Activated T-helper 1 cell treated with anti-CD3 and anti-CD28 coated beads, Interleukin-12 subunit alpha, Interleukin-12 subunit beta, Interleukin-2, Interleukin-4 antibody, amounts not matched to agents 30 ng/mL and 10 ng/mL and 1 ng/mL, durations not matched to agents 14 hours and 24 hours and 36 hours (primary cell): ENCODE measurements at regions of chr14 and their contacts with region 1.

Region 1: GRCh38 chr14:21414137-21414631 is 30.4 kb upstream of the SUPT16H start:
- DNase-seq: no peak
- H3K4me3 Mint-ChIP-seq: peak overlapping the region; percentile 19
- H3K27ac Mint-ChIP-seq: peak overlapping the region; percentile 92
- H3K4me1 Mint-ChIP-seq: peaks cover 26% of the 10 kb centered on the region
- H3K27me3 Mint-ChIP-seq: no peaks in the 10 kb centered on the region

Region 2: DNA sequence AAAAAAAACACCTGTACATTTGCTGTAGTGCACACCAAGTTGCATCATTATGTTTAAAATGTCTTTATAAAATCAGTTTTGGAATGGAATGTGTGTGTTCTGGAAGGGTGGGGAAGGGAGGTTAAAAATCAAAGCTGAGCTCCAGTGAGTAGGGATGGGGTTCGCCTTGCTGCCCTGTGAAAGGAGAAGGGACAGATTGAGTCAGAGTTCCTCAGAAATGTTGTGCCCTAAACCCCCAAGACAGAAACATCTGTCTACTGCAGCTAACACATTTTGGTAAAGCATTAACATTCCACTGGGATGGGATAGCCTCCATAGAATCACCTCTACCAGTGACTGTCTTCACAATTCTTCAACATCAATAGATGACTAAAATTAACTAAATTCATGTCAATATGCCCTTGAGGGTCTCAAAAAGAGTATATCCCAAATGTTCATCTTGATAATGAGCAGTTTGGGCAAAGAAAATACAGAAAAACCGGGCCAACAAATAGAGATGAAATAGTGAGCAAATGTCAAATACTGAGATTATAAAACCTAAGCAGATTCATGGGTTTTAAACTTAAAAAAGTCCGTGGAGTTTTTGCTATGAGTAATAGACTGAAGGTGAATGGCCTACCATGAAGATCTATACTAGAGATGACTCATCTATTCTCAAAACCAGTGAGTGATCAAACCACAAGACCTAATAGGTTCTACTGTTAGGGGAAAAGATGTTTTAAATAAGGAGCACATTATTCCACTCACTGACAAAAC is 150.3 kb before region 1 on chr14:
- intact Hi-C with region 1: loop called (anchors 1 kb)
- DNase-seq: no peak
- H3K4me3 Mint-ChIP-seq: peak overlapping the region; percentile 99
- H3K27ac Mint-ChIP-seq: peak overlapping the region; percentile 91
- H3K4me1 Mint-ChIP-seq: peaks cover 70% of the 10 kb centered on the region
- H3K27me3 Mint-ChIP-seq: no peaks in the 10 kb centered on the region

Region 3: GRCh38 chr14:21449899-21450216 is 35.7 kb after region 1 on chr14:
- intact Hi-C with region 1: loop called (anchors 1 kb)
- DNase-seq: no peak
- H3K4me3 Mint-ChIP-seq: peak overlapping the region; percentile 27
- H3K27ac Mint-ChIP-seq: peak overlapping the region; percentile 84
- H3K4me1 Mint-ChIP-seq: peaks cover 51% of the 10 kb centered on the region
- H3K27me3 Mint-ChIP-seq: no peaks in the 10 kb centered on the region

Region 4: DNA sequence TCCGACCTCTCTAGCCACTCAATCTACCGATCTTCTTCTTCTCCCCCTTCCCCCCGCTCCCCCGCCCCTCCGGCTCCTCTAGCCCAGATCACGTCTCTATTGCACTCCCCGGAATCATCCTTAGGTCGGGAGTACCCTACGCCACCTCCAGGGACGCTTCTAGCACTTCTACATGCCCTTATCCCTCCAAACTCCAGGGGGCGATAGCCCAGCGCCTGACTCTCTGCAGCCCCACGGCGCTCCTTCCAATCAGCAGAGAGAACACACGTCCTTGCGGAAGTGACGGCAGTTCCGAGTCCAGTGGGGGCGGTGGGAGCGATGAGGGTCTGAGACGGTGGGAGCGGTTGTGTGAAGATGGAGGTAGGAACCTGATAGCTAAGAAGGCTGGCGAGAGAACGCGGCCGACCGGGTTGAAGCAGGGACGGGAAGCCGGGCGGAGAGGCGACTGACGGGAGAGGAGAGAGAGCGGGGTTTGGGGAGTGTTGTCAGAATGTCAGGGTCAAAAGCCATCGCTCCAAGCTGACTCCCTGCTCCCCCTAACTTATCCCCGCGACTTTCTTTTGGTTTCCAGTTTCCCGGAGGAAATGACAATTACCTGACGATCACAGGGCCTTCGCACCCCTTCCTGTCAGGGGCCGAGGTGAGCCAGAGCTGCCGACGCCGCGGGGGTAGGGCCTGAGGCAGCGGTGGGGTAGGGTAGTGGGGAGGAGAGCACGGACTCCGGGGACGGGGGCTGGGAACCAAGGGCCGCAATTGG is 62.9 kb after region 1 on chr14 and contains the starts of genes RAB2B and TOX4:
- intact Hi-C with region 1: loop called (anchors 1 kb)
- DNase-seq: peak; percentile 96
- H3K4me3 Mint-ChIP-seq: peak within 1 kb of the TSS; percentile 100
- H3K27ac Mint-ChIP-seq: peak within 1 kb of the TSS; percentile 99
- H3K4me1 Mint-ChIP-seq: peaks cover 35% of the 10 kb centered on the region
- H3K27me3 Mint-ChIP-seq: peaks cover 2% of the 10 kb centered on the region
- total RNA-seq, gene RAB2B: 30.3 and 32.5 TPM in 2 replicates
- total RNA-seq, gene TOX4: 77.5 and 86.6 TPM in 2 replicates

Region 5: GRCh38 chr14:21510735-21511657 is 96.8 kb after region 1 on chr14 and contains the start of gene METTL3:
- intact Hi-C with region 1: loop called (anchors 1 kb)
- DNase-seq: peak; percentile 93
- H3K4me3 Mint-ChIP-seq: peak within 1 kb of the TSS; percentile 99
- H3K27ac Mint-ChIP-seq: peak within 1 kb of the TSS; percentile 93
- H3K4me1 Mint-ChIP-seq: peaks cover 27% of the 10 kb centered on the region
- H3K27me3 Mint-ChIP-seq: peaks cover 12% of the 10 kb centered on the region
- total RNA-seq, gene METTL3: 75.1 and 77.7 TPM in 2 replicates